ENCODE measurements at regions of chr2 and their contacts with region 1.

Region 1: GRCh38 chr2:100416935-100417710 is at the start of gene CHST10:
- DNase-seq: no peak
- ATAC-seq: peak; percentile 98
- H3K4me3 ChIP-seq: peak within 1 kb of the TSS; percentile 90 to 96
- H3K27ac ChIP-seq: peak within 1 kb of the TSS; percentile 90
- H3K4me1 ChIP-seq: peaks cover 16% of the 10 kb centered on the region; the same call in 1 of the 2 replicates
- H3K27me3 ChIP-seq: no peaks in the 10 kb centered on the region
- CTCF ChIP-seq: no peak
- total RNA-seq, gene CHST10: 22.0 TPM

Region 2: GRCh38 chr2:100394111-100394641 is 22.9 kb before region 1 on chr2:
- CTCF ChIA-PET with region 1: interaction called, 15 read pairs
- POLR2A ChIA-PET with region 1: no interaction called
- in situ Hi-C with region 1: no loop called
- intact Hi-C with region 1: no loop called
- DNase-seq: no peak
- ATAC-seq: no peak
- H3K4me3 ChIP-seq: no peak overlapping the region
- H3K27ac ChIP-seq: no peak overlapping the region
- H3K4me1 ChIP-seq: no peaks in the 10 kb centered on the region
- H3K27me3 ChIP-seq: no peaks in the 10 kb centered on the region
- CTCF ChIP-seq: no peak

Region 3: GRCh38 chr2:100509066-100509465 is 91.9 kb after region 1 on chr2:
- CTCF ChIA-PET with region 1: no interaction called
- POLR2A ChIA-PET with region 1: no interaction called
- in situ Hi-C with region 1: no loop called
- intact Hi-C with region 1: no loop called
- DNase-seq: no peak
- ATAC-seq: no peak
- H3K4me3 ChIP-seq: no peak overlapping the region
- H3K27ac ChIP-seq: no peak overlapping the region
- H3K4me1 ChIP-seq: no peaks in the 10 kb centered on the region
- H3K27me3 ChIP-seq: no peaks in the 10 kb centered on the region; the same call in 1 of the 2 replicates
- CTCF ChIP-seq: no peak

Region 4: DNA sequence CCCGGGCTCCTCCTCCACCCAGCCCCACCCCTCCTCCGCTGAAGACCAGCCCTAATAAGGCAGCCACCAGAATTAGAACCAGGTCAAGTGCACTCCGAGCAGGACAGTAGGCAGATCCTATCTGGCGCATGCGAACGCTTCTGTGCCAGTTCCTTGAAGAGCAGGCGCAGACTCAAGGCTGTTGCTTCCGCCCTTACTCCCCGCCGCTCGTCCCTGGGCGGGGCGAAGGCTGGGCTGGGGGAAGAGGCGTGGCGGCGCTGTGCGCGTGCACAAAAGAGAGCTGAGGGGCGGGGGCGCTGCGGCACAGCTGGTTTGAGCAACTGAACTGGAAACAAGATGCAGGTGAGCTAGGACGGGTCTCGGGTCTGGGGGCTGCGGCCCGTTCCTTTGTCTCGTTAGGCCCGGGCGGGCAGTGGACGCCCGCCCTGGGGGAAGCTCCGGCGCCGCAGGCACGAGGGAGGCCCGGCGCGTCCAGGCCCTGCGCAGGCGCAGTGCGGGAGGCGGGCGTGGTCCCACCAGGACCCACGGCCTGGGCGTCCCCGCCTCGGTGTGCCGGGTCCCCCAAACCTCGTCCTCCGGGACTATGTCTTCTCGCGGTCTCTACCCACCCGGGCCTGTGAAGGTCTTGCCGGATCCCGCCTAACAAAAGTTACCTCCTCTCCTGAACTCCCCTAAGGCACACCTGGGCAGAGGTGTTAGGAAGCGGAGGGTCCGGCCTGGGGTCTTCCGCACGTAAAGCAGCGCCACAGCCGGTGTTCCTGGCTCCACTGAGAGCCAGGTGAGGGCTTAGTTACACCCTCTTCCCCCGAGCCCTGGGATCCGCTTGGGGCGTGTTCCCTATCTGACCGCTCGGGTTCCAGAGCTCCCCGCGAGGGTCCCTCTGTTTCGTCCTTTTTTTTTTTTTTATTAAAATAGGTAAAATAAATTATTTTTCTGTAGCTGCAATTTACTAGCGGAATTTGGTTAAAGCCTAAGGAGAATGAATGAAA is 145.9 kb after region 1 on chr2 and contains the start of gene PDCL3:
- CTCF ChIA-PET with region 1: no interaction called
- POLR2A ChIA-PET with region 1: no interaction called
- in situ Hi-C with region 1: no loop called
- intact Hi-C with region 1: loop called (anchors 2 kb)
- DNase-seq: peak; percentile 90
- ATAC-seq: peak; percentile 98
- H3K4me3 ChIP-seq: peak within 1 kb of the TSS; percentile 83 to 97
- H3K27ac ChIP-seq: peak within 1 kb of the TSS; percentile 97
- H3K4me1 ChIP-seq: peaks cover 8% of the 10 kb centered on the region
- H3K27me3 ChIP-seq: no peaks in the 10 kb centered on the region
- CTCF ChIP-seq: no peak
- total RNA-seq, gene PDCL3: 43.1 TPM

Region 5: DNA sequence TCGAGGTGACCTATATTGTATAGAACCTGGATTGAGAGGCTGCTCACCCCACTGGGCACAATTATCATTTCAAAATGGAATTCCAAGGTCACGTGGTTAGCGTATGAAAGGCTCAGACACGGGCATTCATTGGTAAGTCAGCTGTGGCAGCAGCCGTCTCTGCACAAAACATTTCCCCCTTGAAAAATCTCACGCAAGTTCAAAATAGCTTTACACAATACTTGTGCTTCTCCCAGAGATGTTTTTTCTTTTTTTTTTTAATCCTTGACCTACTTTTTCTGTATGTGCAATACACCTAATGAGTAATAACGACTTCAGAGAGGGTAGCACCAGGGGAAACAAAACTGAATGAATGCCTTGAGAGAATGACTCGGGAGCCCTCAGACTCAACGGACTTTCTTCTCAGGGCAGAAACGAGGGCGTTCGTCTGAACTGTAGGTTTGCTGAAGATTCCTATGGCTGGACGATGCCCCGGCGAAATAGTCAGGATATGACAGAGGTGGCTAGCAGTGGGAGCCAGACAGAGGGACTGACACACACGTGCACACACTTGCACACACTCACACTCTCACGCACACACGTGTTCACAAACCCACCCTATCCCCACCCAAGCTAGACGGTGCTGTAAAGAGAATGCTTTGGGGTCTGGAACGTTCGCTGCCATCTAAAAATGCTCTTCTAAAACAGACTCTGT is 223.5 kb after region 1 on chr2:
- CTCF ChIA-PET with region 1: no interaction called
- POLR2A ChIA-PET with region 1: no interaction called
- in situ Hi-C with region 1: no loop called
- intact Hi-C with region 1: no loop called
- DNase-seq: no peak
- ATAC-seq: no peak
- H3K4me3 ChIP-seq: no peak overlapping the region
- H3K27ac ChIP-seq: no peak overlapping the region
- H3K4me1 ChIP-seq: no peaks in the 10 kb centered on the region
- H3K27me3 ChIP-seq: 0 out of 2 replicates have a peak, but pooled peaks cover 3% of the 10 kb centered on the region
- CTCF ChIP-seq: no peak